Posterior vena cava (tissue), 2 donors: ENCODE measurements at regions of chr7 and their contacts with region 1.

Region 1: DNA sequence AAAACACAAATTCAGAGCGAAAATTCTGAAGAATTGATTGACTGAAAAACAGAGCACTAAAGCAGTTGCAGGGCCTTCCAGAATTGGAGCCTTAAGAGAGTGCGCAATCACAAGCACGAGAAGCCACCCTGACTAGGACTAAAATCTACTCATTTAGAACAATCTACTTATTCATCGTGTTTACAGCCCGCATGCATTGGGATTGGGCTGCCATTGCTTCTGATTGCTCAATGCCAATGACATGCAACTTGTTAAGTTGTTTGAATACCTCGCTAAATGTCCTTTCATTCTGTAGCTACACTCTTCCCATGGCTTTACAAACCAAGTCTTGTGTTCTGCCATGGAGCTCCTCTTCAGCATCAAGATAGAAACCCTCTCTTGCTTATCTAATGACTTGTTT is 425.9 kb upstream of the POM121L12 start:
- DNase-seq: no peak

Region 2: DNA sequence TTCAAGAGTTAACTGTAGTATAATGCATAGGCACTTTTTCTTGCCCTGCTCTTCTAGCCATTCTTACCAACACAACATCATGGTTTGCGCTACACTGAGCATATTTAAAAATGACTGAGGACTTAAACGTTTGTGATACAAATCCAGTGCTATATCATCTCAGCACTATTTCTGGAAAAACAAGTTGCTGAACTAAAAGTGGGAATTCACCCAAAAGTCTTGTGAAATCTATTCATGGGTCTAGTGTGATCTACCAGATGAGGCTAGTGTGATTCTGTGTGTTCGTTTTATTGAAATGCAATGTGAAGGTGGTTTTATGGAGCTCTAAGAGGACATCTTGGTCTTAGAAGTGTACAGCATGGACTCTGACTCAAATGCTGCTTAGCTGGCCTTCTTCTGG is 158.7 kb before region 1 on chr7:
- intact Hi-C with region 1: no loop called
- DNase-seq: no peak

Region 3: GRCh38 chr7:52525772-52526341 is 83.7 kb before region 1 on chr7:
- intact Hi-C with region 1: loop called in 1 of 2 experiments (anchors 2 kb)
- DNase-seq: no peak

Region 4: GRCh38 chr7:52749880-52750279 is 140.4 kb after region 1 on chr7:
- intact Hi-C with region 1: no loop called
- DNase-seq: no peak

Region 5: DNA sequence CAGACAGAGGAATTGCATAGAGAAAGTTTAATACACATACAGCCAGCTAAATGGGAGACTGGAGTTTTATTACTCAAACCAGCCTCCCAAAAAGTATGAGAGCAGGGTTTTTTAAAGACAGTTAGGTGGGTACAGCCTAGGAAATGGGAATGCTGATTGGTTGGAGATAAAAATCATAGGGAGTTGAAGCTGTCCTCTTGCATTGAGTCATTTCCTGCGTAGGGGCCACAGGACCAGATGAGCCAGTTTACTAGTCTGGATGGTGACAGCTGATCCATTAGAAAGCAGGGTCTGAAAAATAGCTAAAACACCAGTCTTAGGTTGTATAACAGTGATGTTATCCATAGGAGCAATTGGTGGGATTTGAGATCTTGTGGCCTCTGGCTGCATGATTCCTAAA is 349.8 kb after region 1 on chr7:
- intact Hi-C with region 1: no loop called
- DNase-seq: no peak